ENCODE measurements at regions of chr12 and their contacts with region 1.

Region 1: DNA sequence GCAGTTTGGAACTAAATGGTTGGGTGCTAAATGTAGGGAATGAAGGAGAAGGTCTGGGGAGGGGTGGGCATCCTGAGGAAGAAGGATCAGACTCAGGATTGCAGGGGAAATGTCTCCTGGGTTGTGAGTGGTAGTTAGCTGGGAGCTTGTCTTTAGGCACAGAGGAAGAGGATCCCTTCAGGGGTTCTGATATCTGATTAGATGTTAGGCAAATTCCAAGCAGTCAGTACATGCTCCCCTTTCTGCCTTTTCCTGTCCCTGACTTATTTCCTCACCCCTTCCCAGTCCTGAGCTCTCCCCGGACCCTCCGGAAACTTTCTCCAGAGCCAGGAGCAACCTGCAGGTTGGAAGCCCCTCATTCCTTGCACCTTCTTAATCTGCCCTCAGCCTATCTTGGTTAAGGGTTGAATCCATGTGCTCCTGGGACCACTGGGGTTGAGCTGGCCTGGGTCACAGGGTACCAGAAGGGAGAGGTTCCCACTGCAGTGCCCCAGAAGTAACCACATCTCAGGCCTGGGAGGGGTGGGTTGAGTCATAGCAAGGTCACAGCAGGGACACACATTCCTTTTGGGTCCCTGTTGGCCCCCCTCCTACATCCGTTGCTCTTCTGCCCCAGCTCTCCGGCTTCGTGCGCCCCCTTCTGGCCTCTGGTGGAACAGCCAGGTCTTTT is 1.6 kb downstream of the IGFBP6 start:
- DNase-seq: peak; percentile 82 to 94 (median 86)
- ATAC-seq: peak; percentile 73
- H3K4me3 ChIP-seq: no peak overlapping the region
- H3K4me3 Mint-ChIP-seq: peak overlapping the region; percentile 71
- H3K27ac ChIP-seq: no peak overlapping the region
- H3K27ac Mint-ChIP-seq: peak overlapping the region; percentile 4
- H3K4me1 ChIP-seq: peaks cover 63% of the 10 kb centered on the region
- H3K4me1 Mint-ChIP-seq: peaks cover 48% of the 10 kb centered on the region
- H3K27me3 ChIP-seq: peaks cover 0 to 11% of the 10 kb centered on the region in 2 experiments
- H3K27me3 Mint-ChIP-seq: peaks cover 5% of the 10 kb centered on the region
- CTCF ChIP-seq: peak; percentile 97

Region 2: DNA sequence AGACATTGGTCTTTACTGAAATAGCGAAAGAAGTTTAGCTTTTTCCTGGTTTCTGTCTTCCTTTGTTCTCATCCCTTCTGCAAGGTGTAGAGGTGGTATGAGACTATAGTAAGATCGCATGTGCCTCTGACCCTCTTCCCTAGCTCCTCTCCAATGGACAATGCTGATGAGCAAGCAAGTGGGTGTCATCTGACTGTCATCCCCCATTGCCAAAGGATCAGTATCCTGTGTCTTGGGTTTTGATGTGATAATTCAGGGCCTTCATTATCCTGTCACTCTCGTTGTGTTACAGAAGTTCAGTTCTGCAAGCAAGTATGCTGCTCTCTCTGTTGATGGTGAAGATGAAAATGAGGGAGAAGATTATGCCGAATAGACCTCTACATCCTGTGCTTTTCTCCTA is 59.3 kb before region 1 on chr12:
- CTCF ChIA-PET with region 1: interaction called, 3 read pairs
- POLR2A ChIA-PET with region 1: no interaction called
- intact Hi-C with region 1: loop called in 1 of 2 experiments (anchors 5 kb)
- DNase-seq: no peak
- ATAC-seq: no peak
- H3K4me3 ChIP-seq: no peak overlapping the region
- H3K4me3 Mint-ChIP-seq: no peak overlapping the region
- H3K27ac ChIP-seq: no peak overlapping the region
- H3K27ac Mint-ChIP-seq: no peak overlapping the region
- H3K4me1 ChIP-seq: peaks cover 12% of the 10 kb centered on the region
- H3K4me1 Mint-ChIP-seq: peaks cover 19% of the 10 kb centered on the region
- H3K27me3 ChIP-seq: no peaks in the 10 kb centered on the region
- H3K27me3 Mint-ChIP-seq: no peaks in the 10 kb centered on the region
- CTCF ChIP-seq: no peak

Region 3: DNA sequence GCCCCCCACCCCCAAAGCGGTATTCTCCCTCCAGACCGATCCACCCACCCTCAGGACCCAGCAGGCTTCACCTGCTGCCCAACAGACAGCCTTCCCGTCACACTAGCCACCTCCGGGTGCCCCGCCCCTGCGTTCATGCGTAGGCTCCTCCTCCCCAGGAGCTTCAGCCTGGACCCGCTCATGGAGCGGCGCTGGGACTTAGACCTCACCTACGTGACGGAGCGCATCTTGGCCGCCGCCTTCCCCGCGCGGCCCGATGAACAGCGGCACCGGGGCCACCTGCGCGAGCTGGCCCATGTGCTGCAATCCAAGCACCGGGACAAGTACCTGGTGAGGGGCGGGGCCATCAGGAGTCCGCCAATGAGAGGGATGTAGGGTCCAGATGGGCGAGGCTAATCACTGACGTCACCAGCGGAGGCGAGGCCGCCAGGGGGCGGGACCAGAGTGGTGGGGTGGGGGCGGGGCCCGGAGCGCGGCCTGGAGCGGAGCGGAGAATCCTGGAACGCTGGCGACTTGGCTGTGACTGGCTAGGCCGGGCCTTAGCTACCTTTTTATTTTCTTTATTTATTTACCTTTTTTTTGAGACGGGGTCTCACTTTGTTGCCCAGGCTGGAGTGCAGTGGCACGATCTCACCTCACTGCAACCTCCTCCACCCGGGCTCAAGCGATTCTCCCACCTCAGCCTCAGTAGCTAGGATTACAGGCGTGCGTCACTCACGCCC is 44.8 kb before region 1 on chr12:
- CTCF ChIA-PET with region 1: interaction called, 21 read pairs
- POLR2A ChIA-PET with region 1: interaction called, 3 read pairs
- intact Hi-C with region 1: no loop called
- DNase-seq: peak; percentile 85 to 97 (median 91)
- ATAC-seq: peak; percentile 89
- H3K4me3 ChIP-seq: peak overlapping the region; percentile 85
- H3K4me3 Mint-ChIP-seq: peak overlapping the region; percentile 96
- H3K27ac ChIP-seq: peak overlapping the region; percentile 21 to 65
- H3K27ac Mint-ChIP-seq: peak overlapping the region; percentile 92
- H3K4me1 ChIP-seq: peaks cover 17% of the 10 kb centered on the region
- H3K4me1 Mint-ChIP-seq: peaks cover 15% of the 10 kb centered on the region
- H3K27me3 ChIP-seq: no peaks in the 10 kb centered on the region
- H3K27me3 Mint-ChIP-seq: no peaks in the 10 kb centered on the region
- CTCF ChIP-seq: no peak

Region 4: DNA sequence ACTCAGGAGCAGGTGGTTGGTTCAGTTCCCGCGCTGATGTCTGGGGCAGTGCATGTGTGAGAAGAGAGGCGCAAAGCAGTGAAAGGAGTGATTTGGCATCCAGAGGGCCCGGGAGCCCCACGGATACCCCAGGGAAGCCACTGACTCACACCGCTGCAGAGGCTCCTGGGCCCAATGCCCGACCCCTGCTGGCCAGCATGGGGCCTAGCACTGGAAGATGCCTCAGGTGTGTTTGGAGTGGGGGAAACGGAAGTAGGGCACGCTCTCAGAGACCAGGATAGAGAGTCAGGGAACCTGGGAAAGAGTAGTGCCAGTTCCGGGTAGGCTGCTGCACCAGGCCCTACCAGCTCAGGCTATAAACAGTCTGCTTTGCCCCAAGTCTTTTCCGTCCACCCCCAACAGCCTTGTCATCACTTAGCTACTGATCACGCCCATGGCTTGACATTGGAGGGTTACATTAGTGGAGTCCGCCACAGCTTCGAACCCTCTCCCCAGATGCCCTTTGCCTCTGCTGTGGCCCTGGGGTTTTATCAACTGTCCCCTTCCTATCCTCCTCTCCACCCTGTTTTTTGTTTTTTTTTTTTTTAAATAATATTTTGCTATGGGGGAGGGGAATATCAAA is 91.1 kb after region 1 on chr12:
- CTCF ChIA-PET with region 1: no interaction called
- POLR2A ChIA-PET with region 1: no interaction called
- intact Hi-C with region 1: no loop called
- DNase-seq: peak in 13 of 14 experiments; percentile 33 to 78 (median 46)
- ATAC-seq: peak; percentile 98
- H3K4me3 ChIP-seq: no peak overlapping the region
- H3K4me3 Mint-ChIP-seq: no peak overlapping the region
- H3K27ac ChIP-seq: no peak overlapping the region
- H3K27ac Mint-ChIP-seq: peak overlapping the region; percentile 68
- H3K4me1 ChIP-seq: peaks cover 20% of the 10 kb centered on the region
- H3K4me1 Mint-ChIP-seq: peaks cover 32% of the 10 kb centered on the region
- H3K27me3 ChIP-seq: no peaks in the 10 kb centered on the region
- H3K27me3 Mint-ChIP-seq: no peaks in the 10 kb centered on the region
- CTCF ChIP-seq: peak; percentile 76

Region 5: GRCh38 chr12:53476769-53477209 is 377.7 kb after region 1 on chr12:
- CTCF ChIA-PET with region 1: no interaction called
- POLR2A ChIA-PET with region 1: no interaction called
- intact Hi-C with region 1: no loop called
- DNase-seq: peak in 3 of 14 experiments; percentile 23 to 45 (median 37)
- ATAC-seq: peak; percentile 31
- H3K4me3 ChIP-seq: no peak overlapping the region
- H3K4me3 Mint-ChIP-seq: no peak overlapping the region
- H3K27ac ChIP-seq: no peak overlapping the region
- H3K27ac Mint-ChIP-seq: peak overlapping the region; percentile 52
- H3K4me1 ChIP-seq: peaks cover 11% of the 10 kb centered on the region
- H3K4me1 Mint-ChIP-seq: peaks cover 54% of the 10 kb centered on the region
- H3K27me3 ChIP-seq: no peaks in the 10 kb centered on the region
- H3K27me3 Mint-ChIP-seq: no peaks in the 10 kb centered on the region
- CTCF ChIP-seq: peak; percentile 35

Measured in CD4-positive, alpha-beta T cell (primary cell).